Transverse colon (tissue), 4 donors: ENCODE measurements at regions of chr9 and their contacts with region 1.

Region 1: DNA sequence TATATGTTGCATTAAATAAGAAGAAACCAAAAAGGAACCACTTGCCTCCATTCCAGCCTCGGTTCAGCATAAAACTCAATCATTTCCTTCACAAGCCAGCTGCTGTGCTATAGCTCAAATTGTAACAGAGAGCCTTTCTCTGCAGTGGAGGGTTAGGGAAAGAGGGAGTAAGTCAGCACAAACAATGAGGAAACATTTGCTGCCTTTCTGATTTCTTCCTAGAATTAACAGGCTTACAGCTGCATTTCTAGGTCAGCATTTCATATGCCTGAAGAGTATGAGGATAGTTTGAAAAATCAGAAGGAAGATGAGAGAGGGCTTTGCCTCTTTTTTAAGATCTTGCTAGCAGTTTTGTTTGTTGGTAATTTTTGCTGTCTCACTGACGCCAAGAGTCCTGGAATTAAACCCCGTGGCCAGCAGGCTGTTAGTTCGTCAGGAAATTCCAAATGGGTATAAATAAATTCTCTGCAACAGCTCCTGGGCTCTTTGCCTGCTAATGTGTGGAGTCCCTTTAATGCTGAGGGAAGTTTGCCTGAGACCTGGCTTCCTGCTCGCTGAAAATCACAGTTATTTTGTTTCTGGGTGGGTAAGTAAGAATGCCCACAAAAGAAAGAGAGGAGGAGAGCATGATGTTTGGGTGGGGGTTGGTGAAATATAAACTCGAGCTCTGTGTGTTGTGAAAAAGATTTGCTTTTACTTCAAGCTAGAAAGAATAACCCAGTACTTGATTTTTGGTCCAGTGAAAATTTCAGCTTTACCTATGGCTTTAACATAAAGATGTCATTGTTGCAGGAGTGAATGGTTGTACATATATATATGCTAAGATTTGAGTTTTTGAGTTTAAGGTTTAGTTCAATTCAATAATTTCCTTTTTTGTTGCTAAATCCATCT is 148.1 kb upstream of the DMRT1 start:
- DNase-seq: peak; percentile 32
- H3K4me3 ChIP-seq: peak overlapping the region in 1 of 4 donors; percentile 7
- H3K27ac ChIP-seq: peak overlapping the region; percentile 82 to 90 (median 86)
- H3K4me1 ChIP-seq: peaks cover 20 to 44% (median 25%) of the 10 kb centered on the region in 4 donors
- H3K27me3 ChIP-seq: no peaks in the 10 kb centered on the region
- CTCF ChIP-seq: peak in 1 of 5 experiments; percentile 15
- EP300 ChIP-seq: no peak
- POLR2A ChIP-seq: no peak

Region 2: DNA sequence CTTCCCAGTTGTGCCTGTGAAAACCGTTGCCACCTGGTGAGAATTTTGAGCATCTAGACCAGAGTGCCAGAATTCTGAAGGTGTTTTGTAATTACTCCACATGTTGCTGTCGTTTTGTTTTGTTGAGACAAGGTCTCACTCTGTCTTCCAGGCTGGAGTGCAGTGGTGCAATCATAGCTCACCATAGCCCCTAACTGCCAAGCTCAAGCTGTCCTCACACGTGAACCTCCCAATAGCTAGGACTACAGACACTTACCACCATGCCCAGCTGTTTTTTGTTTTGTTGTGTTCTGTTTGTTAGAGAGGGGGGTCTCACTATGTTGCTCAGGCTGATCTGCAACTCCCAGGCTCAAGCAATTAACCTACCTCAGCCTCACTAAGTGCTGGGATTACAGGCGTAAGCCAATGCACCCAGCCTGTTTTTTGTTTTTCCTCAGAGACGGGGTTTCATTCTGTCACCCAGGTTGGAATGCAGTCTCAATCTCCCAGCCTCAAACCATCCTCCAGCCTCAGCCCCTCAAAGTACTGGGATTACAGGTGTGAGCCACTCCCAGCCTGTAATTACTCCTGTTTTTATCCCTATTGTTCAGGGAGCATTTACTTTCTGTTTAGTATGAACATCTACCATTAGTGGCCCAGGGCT is 26.9 kb after region 1 on chr9:
- in situ Hi-C with region 1: no loop called
- intact Hi-C with region 1: loop called (anchors 2 kb)
- DNase-seq: no peak
- H3K4me3 ChIP-seq: no peak overlapping the region
- H3K27ac ChIP-seq: peak overlapping the region in 2 of 4 donors; percentile 27 to 28
- H3K4me1 ChIP-seq: peaks cover 5 to 22% (median 9%) of the 10 kb centered on the region in 4 donors
- H3K27me3 ChIP-seq: no peaks in the 10 kb centered on the region
- CTCF ChIP-seq: no peak
- EP300 ChIP-seq: no peak
- POLR2A ChIP-seq: no peak